Activated CD4-positive, alpha-beta memory T cell treated with anti-CD3 and anti-CD28 coated beads for 36 hours (primary cell): ENCODE measurements at regions of chr6 and their contacts with region 1.

Region 1: GRCh38 chr6:106444777-106445507 is 84.4 kb downstream of the CRYBG1 start:
- DNase-seq: no peak
- H3K4me3 Mint-ChIP-seq: no peak overlapping the region
- H3K27ac Mint-ChIP-seq: no peak overlapping the region
- H3K4me1 Mint-ChIP-seq: peaks cover 17% of the 10 kb centered on the region
- H3K27me3 Mint-ChIP-seq: peaks cover 25% of the 10 kb centered on the region

Region 2: DNA sequence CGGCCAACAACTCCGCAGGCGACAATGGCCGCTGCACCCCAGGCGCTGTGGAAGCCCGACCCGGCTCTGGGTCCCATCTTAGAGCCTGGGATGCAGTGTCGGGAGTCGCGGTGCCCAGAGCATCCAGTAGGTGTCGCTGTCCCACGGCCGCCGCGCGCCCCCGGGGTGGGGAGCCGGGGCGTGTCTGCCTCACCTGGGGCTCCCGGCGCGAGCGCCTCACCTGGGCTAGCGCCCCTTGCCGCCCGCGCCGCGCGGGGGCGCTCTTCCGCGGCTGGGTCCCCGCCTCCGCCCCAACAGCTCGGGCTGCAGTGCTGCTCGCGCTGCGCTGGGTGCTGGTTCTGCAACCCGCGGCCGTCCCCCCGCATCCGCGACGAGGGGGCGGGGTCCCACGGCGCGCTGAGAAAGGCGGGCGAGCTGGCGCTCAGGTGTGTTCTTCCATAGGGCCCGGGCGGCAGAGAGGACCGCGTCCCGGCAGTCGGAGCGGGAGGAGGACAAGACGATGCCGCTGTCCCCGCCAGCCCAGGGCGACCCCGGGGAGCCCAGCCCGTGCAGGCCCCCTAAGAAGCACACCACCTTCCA is 84.4 kb before region 1 on chr6 and contains the start of gene CRYBG1:
- CTCF ChIA-PET with region 1: no interaction called
- POLR2A ChIA-PET with region 1: no interaction called
- intact Hi-C with region 1: loop called (anchors 5 kb)
- DNase-seq: peak; percentile 83
- H3K4me3 Mint-ChIP-seq: peak within 1 kb of the TSS; percentile 68
- H3K27ac Mint-ChIP-seq: no peak within 1 kb of the TSS
- H3K4me1 Mint-ChIP-seq: peaks cover 9% of the 10 kb centered on the region
- H3K27me3 Mint-ChIP-seq: peaks cover 37% of the 10 kb centered on the region
- total RNA-seq, gene CRYBG1: 38.4 to 39.3 TPM

Region 3: DNA sequence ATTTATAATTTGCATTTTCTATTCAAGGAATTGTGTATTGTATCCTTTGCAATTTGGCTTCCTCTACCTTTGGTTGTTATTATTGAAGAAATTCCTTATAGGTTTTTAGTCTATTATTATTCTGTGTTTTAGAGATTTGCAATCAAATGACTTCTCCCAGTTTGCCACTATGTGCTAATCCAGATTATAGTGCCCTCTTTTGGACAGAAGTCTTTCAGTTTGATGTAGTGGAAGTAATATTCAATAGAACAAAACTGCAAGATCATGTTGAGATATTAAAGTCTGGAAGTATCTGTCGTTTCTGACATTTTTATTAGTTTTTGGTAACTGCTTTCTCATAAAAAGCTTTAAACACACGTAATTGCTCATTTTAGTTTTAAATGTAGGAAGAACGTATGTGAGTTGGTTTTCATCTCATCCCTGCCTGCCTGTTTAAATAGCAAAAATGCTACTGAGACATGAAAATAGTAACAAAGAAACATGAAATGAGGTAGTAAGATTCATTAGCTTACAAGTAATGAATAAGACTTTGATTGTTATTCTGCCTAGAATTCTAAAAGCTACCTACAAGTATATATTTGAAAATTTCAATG is 111.5 kb after region 1 on chr6:
- CTCF ChIA-PET with region 1: interaction called, 440 read pairs
- POLR2A ChIA-PET with region 1: no interaction called
- intact Hi-C with region 1: no loop called
- DNase-seq: no peak
- H3K4me3 Mint-ChIP-seq: no peak overlapping the region
- H3K27ac Mint-ChIP-seq: no peak overlapping the region
- H3K4me1 Mint-ChIP-seq: peaks cover 30% of the 10 kb centered on the region
- H3K27me3 Mint-ChIP-seq: no peaks in the 10 kb centered on the region

Region 4: GRCh38 chr6:106979427-106979884 is 534.5 kb after region 1 on chr6:
- CTCF ChIA-PET with region 1: interaction called, 56 read pairs
- POLR2A ChIA-PET with region 1: no interaction called
- intact Hi-C with region 1: loop called (anchors 1 kb)
- DNase-seq: peak; percentile 86
- H3K4me3 Mint-ChIP-seq: no peak overlapping the region
- H3K27ac Mint-ChIP-seq: no peak overlapping the region
- H3K4me1 Mint-ChIP-seq: peaks cover 7% of the 10 kb centered on the region
- H3K27me3 Mint-ChIP-seq: peaks cover 29% of the 10 kb centered on the region